Dorsolateral prefrontal cortex (tissue), 120 donors: ENCODE measurements at regions of chr12 and their contacts with region 1.

Region 1: GRCh38 chr12:101010896-101011295 is 199.1 kb downstream of the SLC5A8 start:
- DNase-seq: no peak
- H3K4me3 ChIP-seq: no peak overlapping the region
- H3K27ac ChIP-seq: no peak overlapping the region
- H3K27me3 ChIP-seq: no peaks in the 10 kb centered on the region
- CTCF ChIP-seq: no peak

Region 2: GRCh38 chr12:100955139-100955538 is 55.8 kb before region 1 on chr12:
- intact Hi-C with region 1: no loop called
- DNase-seq: no peak
- H3K4me3 ChIP-seq: no peak overlapping the region
- H3K27ac ChIP-seq: no peak overlapping the region
- H3K27me3 ChIP-seq: no peaks in the 10 kb centered on the region
- CTCF ChIP-seq: no peak

Region 3: DNA sequence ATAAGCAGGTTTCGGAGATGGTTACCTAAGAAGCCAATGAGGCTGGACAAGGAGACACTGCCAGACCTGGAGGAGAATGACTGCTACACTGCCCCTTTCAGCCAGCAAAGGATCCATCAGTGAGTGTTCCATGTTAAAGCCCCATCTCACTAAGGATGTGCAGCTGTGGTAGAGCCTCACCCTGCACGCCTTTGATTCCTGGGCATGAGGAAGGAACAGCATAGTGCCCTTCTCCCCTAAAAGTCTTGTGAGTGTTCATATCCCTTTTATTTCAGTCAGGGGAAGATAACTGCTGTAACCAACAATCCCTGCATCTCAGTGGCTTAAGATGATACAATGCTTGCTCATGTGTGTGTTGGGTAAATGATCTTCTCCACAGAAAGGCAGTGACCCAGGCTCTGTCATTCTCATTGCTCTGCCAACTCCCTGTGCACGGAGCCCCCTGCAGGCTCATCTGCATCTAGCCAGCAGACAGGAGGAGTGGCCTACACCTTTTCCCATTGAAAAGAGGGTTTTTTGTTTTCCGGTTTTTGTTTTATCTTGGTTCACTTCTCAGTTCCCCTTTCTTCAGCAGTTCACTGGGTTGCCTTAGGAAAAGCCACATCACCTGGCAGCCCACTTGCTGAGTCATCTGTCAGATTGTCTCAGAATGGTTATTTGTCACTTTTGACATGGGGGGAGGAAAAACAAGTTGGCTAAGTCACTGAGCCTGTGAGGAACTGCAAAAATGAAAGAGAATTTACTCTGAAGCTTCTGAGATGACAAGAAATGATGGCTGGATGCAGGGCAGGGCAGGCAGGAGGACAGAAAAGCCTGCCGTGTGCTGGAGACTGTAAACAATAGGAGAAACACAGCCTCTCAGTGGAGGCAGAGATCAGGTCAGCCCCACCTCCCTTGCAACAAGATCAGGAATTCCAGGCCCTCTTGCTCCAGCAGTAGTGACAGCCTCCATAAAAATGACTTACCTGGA is 23.1 kb before region 1 on chr12:
- intact Hi-C with region 1: loop called in 1 of 2 experiments (anchors 1 kb)
- DNase-seq: peak in 4 of 10 donors; percentile 7 to 53 (median 36)
- H3K4me3 ChIP-seq: no peak overlapping the region
- H3K27ac ChIP-seq: peak overlapping the region in 6 of 59 donors; percentile 3 to 64 (median 18)
- H3K27me3 ChIP-seq: no peaks in the 10 kb centered on the region
- CTCF ChIP-seq: peak in 39 of 56 donors; percentile 5 to 52 (median 29)